ENCODE measurements at regions of chr18 and their contacts with region 1.

Region 1: DNA sequence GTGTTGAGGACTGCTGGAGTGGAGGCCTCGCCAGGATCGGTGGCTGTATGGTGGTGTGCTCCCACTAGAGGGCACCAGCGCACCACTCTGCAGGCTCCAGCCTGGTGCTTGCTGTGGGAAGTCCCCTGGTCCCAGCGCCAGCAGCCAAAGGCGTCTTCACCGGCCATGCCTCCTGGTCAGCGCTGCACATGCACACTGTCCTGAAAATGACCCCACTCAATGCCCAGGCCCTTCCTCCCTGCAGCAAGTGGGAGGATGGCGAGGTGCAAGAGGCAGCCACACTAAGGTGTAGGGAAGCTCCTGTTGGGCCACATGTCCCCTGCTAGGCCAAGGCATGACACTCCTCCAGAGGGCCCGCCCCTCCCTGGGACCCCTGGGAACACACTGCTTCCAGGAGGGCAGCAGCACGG is 136.5 kb downstream of the CTIF start:
- DNase-seq: peak; percentile 72 to 85
- ATAC-seq: peak; percentile 76 to 81
- H3K4me3 ChIP-seq: no peak overlapping the region
- H3K27ac ChIP-seq: peak overlapping the region in 1 of 4 donors; percentile 1
- H3K4me1 ChIP-seq: peaks cover 18 to 28% of the 10 kb centered on the region in 2 donors
- H3K27me3 ChIP-seq: no peaks in the 10 kb centered on the region
- CTCF ChIP-seq: peak; percentile 92 to 97 (median 94)
- POLR2A ChIP-seq: no peak

Region 2: DNA sequence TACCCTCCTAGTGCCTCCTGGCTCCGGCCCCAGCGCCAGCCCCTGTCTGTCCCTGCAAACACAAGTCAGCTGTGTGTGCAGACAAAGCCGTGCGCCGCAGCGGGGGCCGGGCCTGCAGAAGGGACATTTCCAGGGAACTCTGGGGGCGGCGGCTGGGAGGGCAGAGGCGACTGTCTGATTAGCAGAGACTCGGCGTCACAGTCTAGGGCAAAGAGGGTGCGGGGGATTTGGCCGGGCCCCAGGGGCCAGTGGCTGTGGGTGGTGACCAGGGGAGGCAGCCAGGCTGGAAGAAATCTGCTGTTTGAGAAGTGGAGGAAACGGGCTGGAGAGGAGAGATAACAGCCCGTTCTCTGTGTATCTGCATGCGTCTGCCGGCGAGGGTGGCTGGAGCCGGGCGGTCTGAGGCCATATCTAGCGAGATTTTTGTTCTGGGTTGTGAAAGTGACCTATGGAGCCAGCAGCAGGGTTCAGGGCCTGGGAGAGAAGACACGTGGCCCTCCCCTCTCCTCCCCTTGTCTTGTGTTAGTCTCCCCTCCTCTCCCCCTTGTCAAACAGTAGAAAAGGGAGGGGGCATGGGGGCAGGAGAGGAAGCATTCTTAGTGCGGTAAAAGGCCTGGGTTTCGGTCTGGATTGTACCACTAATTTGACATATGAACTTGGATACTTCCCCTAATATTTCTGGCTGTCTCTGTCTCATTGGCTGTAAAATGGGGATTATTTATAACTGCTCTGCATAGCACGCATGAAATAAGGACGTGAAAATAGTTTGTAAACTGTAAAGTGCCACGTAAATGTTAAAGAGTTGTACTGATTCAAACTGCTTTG is 106.0 kb after region 1 on chr18:
- in situ Hi-C with region 1: no loop called
- intact Hi-C with region 1: loop called (anchors 5 kb)
- DNase-seq: peak; percentile 31 to 69
- ATAC-seq: peak; percentile 44 to 51
- H3K4me3 ChIP-seq: peak overlapping the region in 2 of 4 donors; percentile 21 to 30
- H3K27ac ChIP-seq: peak overlapping the region; percentile 80 to 92 (median 84)
- H3K4me1 ChIP-seq: peaks cover 38 to 46% of the 10 kb centered on the region in 2 donors
- H3K27me3 ChIP-seq: no peaks in the 10 kb centered on the region
- CTCF ChIP-seq: no peak
- POLR2A ChIP-seq: peak in 1 of 2 donors; percentile 9

Region 3: GRCh38 chr18:48934723-48935432 is 259.5 kb after region 1 on chr18:
- in situ Hi-C with region 1: loop called in 1 of 4 experiments (anchors 25 kb)
- intact Hi-C with region 1: loop called (anchors 5 kb)
- DNase-seq: peak; percentile 90 to 97
- ATAC-seq: peak; percentile 94 to 96
- H3K4me3 ChIP-seq: peak overlapping the region; percentile 19 to 39 (median 36)
- H3K27ac ChIP-seq: peak overlapping the region; percentile 88 to 93 (median 89)
- H3K4me1 ChIP-seq: peaks cover 90 to 95% of the 10 kb centered on the region in 2 donors
- H3K27me3 ChIP-seq: no peaks in the 10 kb centered on the region
- CTCF ChIP-seq: no peak
- POLR2A ChIP-seq: peak; percentile 56 to 66

Region 4: GRCh38 chr18:49041435-49042245 is 366.3 kb after region 1 on chr18:
- in situ Hi-C with region 1: no loop called
- intact Hi-C with region 1: loop called (anchors 1 kb)
- DNase-seq: peak in 1 of 2 donors; percentile 38
- ATAC-seq: peak in 1 of 2 donors; percentile 66
- H3K4me3 ChIP-seq: no peak overlapping the region
- H3K27ac ChIP-seq: no peak overlapping the region
- H3K4me1 ChIP-seq: no peaks in the 10 kb centered on the region
- H3K27me3 ChIP-seq: no peaks in the 10 kb centered on the region
- CTCF ChIP-seq: peak in 4 of 5 experiments; percentile 53 to 60 (median 56)
- POLR2A ChIP-seq: no peak

Region 5: GRCh38 chr18:49183921-49184320 is 508.6 kb after region 1 on chr18:
- in situ Hi-C with region 1: loop called in 3 of 4 experiments (anchors 10 kb)
- intact Hi-C with region 1: loop called (anchors 5 kb)
- DNase-seq: no peak
- ATAC-seq: no peak
- H3K4me3 ChIP-seq: no peak overlapping the region
- H3K27ac ChIP-seq: no peak overlapping the region
- H3K4me1 ChIP-seq: no peaks in the 10 kb centered on the region
- H3K27me3 ChIP-seq: no peaks in the 10 kb centered on the region
- CTCF ChIP-seq: no peak
- POLR2A ChIP-seq: no peak

Region 6: DNA sequence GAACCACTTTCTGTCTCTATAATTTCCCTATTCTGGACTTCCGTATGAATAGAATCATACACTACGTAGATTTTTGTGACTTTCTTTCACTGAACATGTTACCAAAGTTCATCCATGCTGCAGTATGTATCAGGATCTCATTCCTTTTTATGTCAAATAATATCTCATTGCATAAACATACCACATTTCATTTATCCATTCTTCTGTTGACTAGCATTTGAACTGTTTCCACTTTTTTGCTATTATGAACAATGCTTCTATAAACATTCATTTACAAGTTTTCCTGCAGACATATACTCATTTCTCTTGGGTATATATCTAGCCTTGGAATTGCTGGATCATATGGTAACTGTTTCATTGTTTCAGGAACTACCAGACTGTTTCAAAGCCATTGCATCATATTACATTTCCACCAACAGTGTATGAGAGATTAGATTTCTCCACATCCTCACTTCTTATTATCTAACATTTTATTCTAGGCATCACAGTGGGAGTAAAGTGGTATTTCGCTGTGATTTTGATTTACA is 598.9 kb after region 1 on chr18:
- in situ Hi-C with region 1: no loop called
- intact Hi-C with region 1: no loop called
- DNase-seq: no peak
- ATAC-seq: no peak
- H3K4me3 ChIP-seq: no peak overlapping the region
- H3K27ac ChIP-seq: no peak overlapping the region
- H3K4me1 ChIP-seq: no peaks in the 10 kb centered on the region
- H3K27me3 ChIP-seq: no peaks in the 10 kb centered on the region
- CTCF ChIP-seq: no peak
- POLR2A ChIP-seq: no peak

Region 7: DNA sequence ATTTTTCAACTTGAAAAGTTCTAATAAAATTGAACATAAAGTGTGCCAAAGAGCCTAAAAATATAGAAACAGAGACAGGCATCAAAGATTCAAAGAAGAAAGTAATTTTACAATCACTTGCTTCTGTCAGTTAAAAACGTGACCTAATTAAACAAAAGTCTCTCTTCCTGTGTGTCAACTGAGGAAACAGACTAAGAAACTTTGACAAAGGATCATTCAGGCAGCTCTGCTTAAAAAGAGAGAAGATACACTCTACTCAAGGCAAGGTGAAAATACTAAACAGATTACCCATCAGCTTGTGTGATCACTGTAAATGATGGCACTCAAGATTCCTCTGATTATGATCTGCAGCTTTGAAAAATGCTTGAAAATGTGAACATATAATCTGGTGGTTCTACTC is 737.3 kb after region 1 on chr18:
- in situ Hi-C with region 1: no loop called
- intact Hi-C with region 1: loop called (anchors 10 kb)
- DNase-seq: no peak
- ATAC-seq: no peak
- H3K4me3 ChIP-seq: no peak overlapping the region
- H3K27ac ChIP-seq: peak overlapping the region in 1 of 4 donors; percentile 4
- H3K4me1 ChIP-seq: peaks cover 0 to 3% of the 10 kb centered on the region in 2 donors
- H3K27me3 ChIP-seq: no peaks in the 10 kb centered on the region
- CTCF ChIP-seq: no peak
- POLR2A ChIP-seq: no peak

Measured in gastrocnemius medialis (tissue), 4 donors.